ENCODE measurements at regions of chr2 and their contacts with region 1.

Region 1: GRCh38 chr2:107025869-107026380 is 140.0 kb upstream of the ST6GAL2 start:
- DNase-seq: peak; percentile 80
- H3K4me3 ChIP-seq: no peak overlapping the region
- H3K27me3 ChIP-seq: no peaks in the 10 kb centered on the region
- CTCF ChIP-seq: no peak

Region 2: DNA sequence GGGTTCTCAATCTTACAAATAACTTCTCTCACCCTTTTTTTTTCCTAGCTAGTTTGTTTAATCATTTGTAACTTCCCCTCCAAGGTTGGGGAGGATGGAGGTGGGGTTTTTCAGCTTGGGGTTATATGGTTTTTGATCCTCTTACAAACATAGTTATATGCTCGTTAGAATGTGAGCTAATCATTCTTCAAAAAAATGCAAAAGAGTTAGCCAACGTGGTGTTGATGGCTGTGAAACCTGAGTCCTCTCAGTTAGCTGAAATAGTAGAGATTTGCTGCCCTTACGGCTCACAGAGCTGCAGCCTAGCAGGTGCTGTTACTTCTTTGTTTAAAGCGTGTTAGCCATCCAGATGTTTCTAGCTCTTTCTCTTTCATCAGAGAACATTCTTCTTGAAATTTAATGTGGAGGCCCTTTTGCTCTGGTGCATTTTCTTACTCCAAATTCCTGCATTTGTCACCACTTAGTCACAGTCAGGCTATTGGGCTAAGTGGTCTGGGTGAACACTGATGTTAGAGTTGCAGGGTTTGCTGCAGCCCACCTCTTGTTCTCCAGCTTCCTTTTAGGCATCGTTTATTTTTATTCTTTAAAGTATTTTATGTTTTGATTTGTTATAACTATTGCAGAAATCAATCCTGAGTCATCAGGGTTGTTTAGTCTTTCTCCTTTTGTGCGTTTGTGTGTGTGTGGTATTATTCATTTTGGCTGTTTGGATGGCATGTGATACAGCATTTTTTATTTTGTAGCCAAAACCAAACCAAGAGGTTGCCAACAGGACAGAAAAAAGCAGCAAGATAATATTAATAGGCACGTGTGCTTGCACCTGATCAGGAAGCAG is 1549.4 kb after region 1 on chr2:
- CTCF ChIA-PET with region 1: no interaction called
- POLR2A ChIA-PET with region 1: interaction called, 12 read pairs
- DNase-seq: peak; percentile 65
- H3K4me3 ChIP-seq: no peak overlapping the region
- H3K27me3 ChIP-seq: no peaks in the 10 kb centered on the region
- CTCF ChIP-seq: no peak

Measured in BJ (cell line).